H1 (cell line): ENCODE measurements at regions of chr22 and their contacts with region 1.

Region 1: GRCh38 chr22:39514373-39514973 is 5.9 kb upstream of the ATF4 start:
- DNase-seq: peak in 1 of 2 experiments; percentile 88
- H3K4me3 ChIP-seq: no peak overlapping the region
- H3K27ac ChIP-seq: no peak overlapping the region
- H3K4me1 ChIP-seq: peaks cover 0 to 3% (median 2%) of the 10 kb centered on the region in 4 experiments; a peak in 3 of 7 replicates
- H3K27me3 ChIP-seq: peaks cover 17 to 52% (median 47%) of the 10 kb centered on the region in 4 experiments
- CTCF ChIP-seq: peak; percentile 57 to 77 (median 67)
- EP300 ChIP-seq: no peak
- POLR2A ChIP-seq: no peak
- RAD21 ChIP-seq: peak; percentile 47 to 57

Region 2: DNA sequence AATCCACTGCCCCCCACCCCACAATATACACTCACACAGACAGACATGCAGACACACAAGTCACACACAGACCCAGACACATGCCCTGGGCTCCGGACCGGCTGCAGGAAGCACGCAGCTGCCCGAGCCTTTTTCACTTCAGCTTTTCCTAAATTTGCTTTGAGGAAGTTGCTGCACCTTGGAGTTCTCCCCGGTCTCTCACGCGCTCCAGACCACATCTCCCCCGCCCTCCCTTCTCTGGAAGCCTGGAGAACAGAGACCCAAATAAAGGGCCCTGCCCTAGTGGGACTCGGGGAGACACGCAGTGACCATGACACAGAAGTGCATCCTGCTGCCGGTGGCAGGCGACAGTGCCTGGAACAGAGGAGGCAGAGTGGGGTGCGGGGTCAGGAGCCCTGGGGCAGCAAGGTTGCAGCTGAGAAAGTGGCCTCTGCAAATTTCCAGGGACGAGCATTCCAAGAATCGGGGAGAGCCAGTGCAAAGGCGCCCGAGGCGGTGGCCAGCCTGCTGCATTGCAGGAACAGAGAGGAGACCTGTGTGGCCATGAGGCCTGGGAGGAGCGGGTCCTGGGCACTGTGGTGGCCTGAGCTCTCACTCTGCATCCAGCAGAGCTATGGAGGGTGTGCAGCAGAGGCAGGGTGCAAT is 214.2 kb before region 1 on chr22:
- CTCF ChIA-PET with region 1: no interaction called
- POLR2A ChIA-PET with region 1: no interaction called
- DNase-seq: no peak
- H3K4me3 ChIP-seq: no peak overlapping the region
- H3K27ac ChIP-seq: no peak overlapping the region
- H3K4me1 ChIP-seq: peaks cover 2 to 24% (median 7%) of the 10 kb centered on the region in 4 experiments
- H3K27me3 ChIP-seq: no peaks in the 10 kb centered on the region; a peak in 1 of 7 replicates
- CTCF ChIP-seq: no peak
- EP300 ChIP-seq: no peak
- POLR2A ChIP-seq: no peak
- RAD21 ChIP-seq: peak in 1 of 2 experiments; percentile 11; a peak in 2 of 4 replicates

Region 3: DNA sequence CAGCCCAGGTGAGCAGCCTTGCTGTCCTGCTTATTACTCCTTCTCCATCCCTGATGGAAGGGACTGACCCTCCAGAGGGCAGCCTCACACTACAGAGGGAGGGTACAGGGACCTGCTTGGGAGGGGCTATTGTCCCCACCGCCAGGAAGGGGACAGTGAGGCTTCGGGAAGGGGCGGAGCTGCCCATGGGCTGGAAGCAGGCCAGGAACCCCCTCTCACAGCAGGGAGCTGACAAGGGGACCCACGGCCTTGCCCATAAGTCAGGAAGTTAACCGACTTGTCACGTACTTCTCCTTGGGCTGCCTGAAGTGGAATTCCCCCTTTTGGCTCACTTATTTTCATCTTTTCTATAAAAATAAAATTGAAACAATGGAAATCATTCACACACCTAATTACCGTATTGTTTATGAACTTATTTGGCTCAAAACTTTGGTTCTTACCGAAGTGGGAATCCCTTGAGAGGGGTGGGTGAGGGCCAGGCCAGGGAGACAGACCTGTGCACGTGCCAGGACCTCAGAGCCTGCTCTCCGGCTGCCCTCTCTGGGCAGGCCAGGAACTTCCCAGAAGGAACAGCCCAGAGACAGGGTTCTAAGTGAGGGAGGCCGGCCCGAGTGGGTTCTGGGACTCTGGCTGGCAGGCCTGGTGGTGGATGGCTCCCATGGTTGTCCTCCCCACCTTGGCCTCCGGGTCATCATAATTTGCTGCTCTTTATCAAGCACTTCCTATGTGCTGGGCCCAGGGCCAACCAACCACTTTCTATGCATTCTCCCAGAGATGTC is 51.8 kb before region 1 on chr22:
- CTCF ChIA-PET with region 1: interaction called, 10 read pairs
- POLR2A ChIA-PET with region 1: interaction called, 9 read pairs
- DNase-seq: no peak
- H3K4me3 ChIP-seq: no peak overlapping the region
- H3K27ac ChIP-seq: no peak overlapping the region
- H3K4me1 ChIP-seq: peaks cover 0 to 5% (median 0%) of the 10 kb centered on the region in 4 experiments; a peak in 3 of 7 replicates
- H3K27me3 ChIP-seq: peaks cover 1 to 10% (median 7%) of the 10 kb centered on the region in 4 experiments; a peak in 6 of 7 replicates
- CTCF ChIP-seq: peak; percentile 38 to 57 (median 52)
- EP300 ChIP-seq: no peak
- POLR2A ChIP-seq: no peak
- RAD21 ChIP-seq: peak; percentile 73 to 77

Region 4: GRCh38 chr22:39478441-39479264 is 35.8 kb before region 1 on chr22:
- CTCF ChIA-PET with region 1: interaction called, 14 read pairs
- POLR2A ChIA-PET with region 1: interaction called, 6 read pairs
- DNase-seq: peak in 1 of 2 experiments; percentile 85
- H3K4me3 ChIP-seq: no peak overlapping the region
- H3K27ac ChIP-seq: no peak overlapping the region
- H3K4me1 ChIP-seq: peaks cover 4 to 15% (median 9%) of the 10 kb centered on the region in 4 experiments; a peak in 6 of 7 replicates
- H3K27me3 ChIP-seq: no peaks in the 10 kb centered on the region; a peak in 1 of 7 replicates
- CTCF ChIP-seq: no peak
- EP300 ChIP-seq: no peak
- POLR2A ChIP-seq: no peak
- RAD21 ChIP-seq: peak in 1 of 2 experiments; percentile 5; a peak in 1 of 4 replicates

Region 5: DNA sequence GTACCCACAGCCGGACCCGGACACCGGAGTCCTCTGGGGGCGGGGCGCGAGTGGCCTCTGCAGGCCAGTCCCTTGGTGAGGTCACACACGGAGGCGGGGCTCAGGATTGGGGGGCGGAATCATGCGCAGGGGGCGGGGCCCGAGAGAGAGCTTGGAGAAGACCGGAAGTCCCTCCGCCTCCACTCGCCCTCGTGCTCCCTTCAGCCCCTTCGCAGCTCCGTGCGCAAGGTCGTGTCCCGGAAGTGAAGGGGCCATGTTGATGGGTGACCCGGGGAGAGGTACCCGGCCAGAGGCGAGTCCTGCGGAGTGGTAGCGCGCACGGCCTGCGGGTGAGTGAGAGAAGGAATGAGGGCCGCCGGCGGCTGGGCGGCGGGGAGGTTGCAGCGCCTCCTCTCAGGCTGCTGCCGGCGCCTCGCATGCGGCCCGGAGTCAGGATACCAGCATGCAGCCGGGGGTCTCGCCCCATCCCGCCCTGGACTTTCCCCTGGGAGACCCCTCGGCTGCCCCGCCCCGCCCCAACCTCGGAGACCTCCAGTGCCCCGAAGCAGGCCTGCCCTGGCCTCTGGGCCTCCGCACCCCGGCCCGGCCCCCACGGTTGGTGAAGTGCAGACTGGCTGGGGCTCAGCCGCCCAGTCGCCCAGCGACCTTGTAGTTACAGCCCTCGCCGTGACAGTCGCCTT is 12.2 kb before region 1 on chr22 and contains the start of gene MIEF1:
- CTCF ChIA-PET with region 1: interaction called, 278 read pairs
- POLR2A ChIA-PET with region 1: interaction called, 32 read pairs
- DNase-seq: peak; percentile 88 to 99
- H3K4me3 ChIP-seq: peak within 1 kb of the TSS; percentile 68 to 88 (median 80)
- H3K27ac ChIP-seq: no peak within 1 kb of the TSS
- H3K4me1 ChIP-seq: peaks cover 3 to 9% (median 4%) of the 10 kb centered on the region in 4 experiments; a peak in 6 of 7 replicates
- H3K27me3 ChIP-seq: peaks cover 0 to 56% (median 36%) of the 10 kb centered on the region in 4 experiments; a peak in 6 of 7 replicates
- CTCF ChIP-seq: no peak
- EP300 ChIP-seq: no peak
- POLR2A ChIP-seq: peak in 1 of 2 experiments; percentile 78; a peak in 2 of 3 replicates
- RAD21 ChIP-seq: no peak
- total RNA-seq, gene MIEF1: 31.4 and 32.7 TPM in 2 replicates

Region 6: GRCh38 chr22:39634671-39635405 is 120.4 kb after region 1 on chr22:
- CTCF ChIA-PET with region 1: no interaction called
- POLR2A ChIA-PET with region 1: no interaction called
- DNase-seq: no peak
- H3K4me3 ChIP-seq: no peak overlapping the region
- H3K27ac ChIP-seq: no peak overlapping the region
- H3K4me1 ChIP-seq: peaks cover 0 to 12% (median 3%) of the 10 kb centered on the region in 4 experiments; a peak in 5 of 7 replicates
- H3K27me3 ChIP-seq: no peaks in the 10 kb centered on the region
- CTCF ChIP-seq: no peak
- EP300 ChIP-seq: no peak
- POLR2A ChIP-seq: no peak
- RAD21 ChIP-seq: no peak

Region 7: GRCh38 chr22:39661842-39662676 is 147.6 kb after region 1 on chr22:
- CTCF ChIA-PET with region 1: no interaction called
- POLR2A ChIA-PET with region 1: no interaction called
- DNase-seq: peak; percentile 71 to 98
- H3K4me3 ChIP-seq: peak overlapping the region; percentile 56 to 69 (median 59)
- H3K27ac ChIP-seq: no peak overlapping the region
- H3K4me1 ChIP-seq: peaks cover 0 to 32% (median 25%) of the 10 kb centered on the region in 4 experiments; a peak in 6 of 7 replicates
- H3K27me3 ChIP-seq: peaks cover 8 to 29% (median 23%) of the 10 kb centered on the region in 4 experiments
- CTCF ChIP-seq: no peak
- EP300 ChIP-seq: no peak
- POLR2A ChIP-seq: peak in 1 of 2 experiments; percentile 57; a peak in 2 of 3 replicates
- RAD21 ChIP-seq: no peak

Region 8: GRCh38 chr22:39674536-39674935 is 160.1 kb after region 1 on chr22:
- CTCF ChIA-PET with region 1: no interaction called
- POLR2A ChIA-PET with region 1: no interaction called
- DNase-seq: no peak
- H3K4me3 ChIP-seq: no peak overlapping the region
- H3K27ac ChIP-seq: no peak overlapping the region
- H3K4me1 ChIP-seq: peaks cover 0 to 6% (median 2%) of the 10 kb centered on the region in 4 experiments; a peak in 2 of 7 replicates
- H3K27me3 ChIP-seq: no peaks in the 10 kb centered on the region
- CTCF ChIP-seq: no peak
- EP300 ChIP-seq: no peak
- POLR2A ChIP-seq: no peak
- RAD21 ChIP-seq: no peak